ENCODE measurements at regions of chr9 and their contacts with region 1.

Region 1: GRCh38 chr9:35732122-35732799 is at the starts of genes CREB3 and TLN1:
- DNase-seq: peak; percentile 98
- H3K4me3 ChIP-seq: peak within 1 kb of the TSS; percentile 82
- H3K27ac ChIP-seq: peak within 1 kb of the TSS; percentile 99
- H3K4me1 ChIP-seq: peaks cover 80% of the 10 kb centered on the region
- H3K27me3 ChIP-seq: no peaks in the 10 kb centered on the region
- CTCF ChIP-seq: no peak
- total RNA-seq, gene CREB3: 20.6 TPM
- total RNA-seq, gene TLN1: 234 TPM

Region 2: DNA sequence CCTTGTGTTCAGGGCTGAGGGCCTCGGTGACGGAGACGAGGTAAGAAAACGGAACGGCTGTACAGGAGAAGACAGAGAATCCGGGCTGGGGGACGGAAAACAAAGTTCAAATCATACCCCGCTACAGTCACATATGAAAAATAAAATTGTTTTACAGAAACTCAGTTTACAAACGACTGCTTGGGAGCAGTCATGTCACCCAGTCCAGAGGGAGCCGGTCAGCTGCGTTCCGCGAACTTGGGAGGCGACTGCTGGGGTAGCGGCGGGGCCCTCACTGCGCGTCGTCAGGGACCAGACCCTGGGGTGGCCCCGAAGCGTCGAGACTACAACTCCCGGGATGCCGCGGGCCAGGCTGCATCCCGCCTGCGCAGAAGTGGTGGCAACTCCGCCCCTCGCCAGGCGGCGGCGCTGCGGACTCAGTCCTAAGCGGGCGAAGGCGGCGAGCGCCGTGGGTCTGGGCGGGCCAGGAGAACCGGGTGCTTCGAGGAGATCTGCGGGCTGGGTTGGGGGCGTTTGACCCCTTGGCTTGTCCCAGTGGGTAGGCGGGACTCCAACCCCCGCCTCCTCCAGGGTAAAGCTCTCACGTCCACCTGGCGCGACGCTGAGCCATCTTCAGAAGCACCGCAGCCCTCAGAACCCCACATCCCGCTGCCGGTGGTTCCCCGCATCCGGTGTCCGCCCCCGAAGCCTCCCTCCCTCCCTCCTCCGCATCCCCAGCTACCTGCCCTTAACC is 85.6 kb before region 1 on chr9:
- intact Hi-C with region 1: loop called (anchors 5 kb)
- DNase-seq: peak; percentile 93
- H3K4me3 ChIP-seq: peak overlapping the region; percentile 78
- H3K27ac ChIP-seq: peak overlapping the region; percentile 82
- H3K4me1 ChIP-seq: peaks cover 14% of the 10 kb centered on the region
- H3K27me3 ChIP-seq: no peaks in the 10 kb centered on the region
- CTCF ChIP-seq: peak; percentile 96